Left ventricle myocardium superior (tissue), 1 donor: ENCODE measurements at regions of chr17 and their contacts with region 1.

Region 1: DNA sequence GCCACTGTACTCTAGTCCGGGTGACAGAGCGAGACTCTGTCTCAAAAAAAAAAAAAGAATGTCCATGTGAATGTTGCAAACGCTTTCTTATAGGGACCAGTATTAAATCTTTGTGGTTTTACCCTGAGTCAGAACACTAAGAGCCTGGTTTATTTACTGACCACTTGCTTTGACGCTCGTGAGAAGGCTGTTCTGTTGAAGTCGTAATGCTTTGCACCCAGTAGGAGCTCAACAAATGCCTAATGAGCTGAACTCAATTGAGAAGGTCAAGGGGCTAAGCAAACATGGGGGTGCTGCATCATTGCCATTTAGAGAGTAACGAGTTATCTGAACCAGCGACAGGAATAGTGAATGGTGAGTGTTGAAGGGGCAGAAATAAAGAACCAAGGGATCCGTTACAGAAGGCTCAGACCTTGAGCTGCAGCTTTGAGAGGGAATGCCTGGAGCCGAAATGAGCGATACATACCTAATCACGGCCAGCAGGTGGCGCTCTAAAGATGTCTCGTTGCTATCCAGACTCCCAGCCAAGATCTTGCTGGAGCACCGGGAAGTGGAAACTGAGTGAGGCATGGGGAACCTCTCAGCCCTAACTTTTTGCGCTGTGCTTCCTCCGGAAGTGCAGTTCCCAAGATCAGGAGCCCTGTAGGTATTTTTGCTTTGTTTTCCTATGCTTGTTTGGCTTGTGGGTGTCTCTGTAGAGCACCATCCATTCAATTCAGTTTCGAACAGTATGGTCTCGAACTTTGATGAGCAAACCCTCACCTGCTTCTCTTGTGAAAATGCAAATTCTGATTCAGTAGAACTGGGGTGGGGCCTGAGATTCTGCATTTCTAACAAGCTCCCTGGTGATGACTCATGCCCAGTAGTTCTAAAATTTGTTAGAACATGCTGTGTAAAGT is 12.6 kb upstream of the RNF222 start:
- DNase-seq: peak; percentile 90
- ATAC-seq: peak; percentile 97

Region 2: DNA sequence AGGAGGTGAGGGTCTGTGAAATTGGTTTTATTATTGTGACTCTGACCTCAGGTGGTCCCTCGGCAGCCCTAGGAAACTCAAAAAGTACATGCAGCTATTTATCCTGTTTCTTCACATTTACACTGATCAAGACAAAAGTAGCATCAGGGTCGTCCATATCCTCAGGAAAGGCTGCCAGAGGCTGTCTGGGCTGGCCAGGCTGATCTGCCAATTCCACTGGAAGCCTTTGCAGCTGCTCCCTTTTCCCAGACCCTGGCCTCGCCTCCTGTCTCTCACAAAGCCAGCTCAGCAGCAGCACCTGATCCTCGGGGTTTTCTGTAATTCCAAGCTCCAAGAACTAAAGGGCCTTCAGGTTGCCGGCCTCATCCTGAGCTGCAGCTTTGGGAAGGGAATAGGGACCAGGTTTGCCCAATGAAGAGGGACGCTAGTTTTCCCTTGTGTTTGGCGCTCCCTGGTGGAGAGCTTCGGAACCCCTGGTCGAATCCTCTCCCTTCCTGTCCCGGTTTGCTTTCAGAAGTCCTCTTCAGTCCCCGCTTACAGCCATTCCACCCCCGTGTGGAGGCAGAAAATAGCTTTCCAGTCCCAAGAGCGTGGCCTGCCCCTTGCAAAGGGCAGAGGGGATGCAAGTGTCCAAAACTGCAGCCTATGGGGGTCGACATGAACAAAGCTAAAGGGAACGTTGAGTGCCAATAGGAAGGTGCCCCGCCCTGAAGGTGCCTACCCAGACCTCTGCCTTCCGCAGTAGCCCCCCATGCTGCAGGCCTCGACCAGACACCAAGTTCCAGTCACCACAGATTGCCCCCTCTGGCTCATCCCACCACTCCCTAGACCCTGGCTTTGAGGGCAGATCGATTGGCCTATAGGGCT is 375.6 kb after region 1 on chr17:
- intact Hi-C with region 1: loop called (anchors 10 kb)
- DNase-seq: peak; percentile 83
- ATAC-seq: peak; percentile 90

Region 3: GRCh38 chr17:8894673-8895578 is 484.7 kb after region 1 on chr17:
- intact Hi-C with region 1: loop called (anchors 10 kb)
- DNase-seq: peak; percentile 54
- ATAC-seq: peak; percentile 86